Posterior vena cava (tissue), 2 donors: ENCODE measurements at regions of chr3 and their contacts with region 1.

Region 1: DNA sequence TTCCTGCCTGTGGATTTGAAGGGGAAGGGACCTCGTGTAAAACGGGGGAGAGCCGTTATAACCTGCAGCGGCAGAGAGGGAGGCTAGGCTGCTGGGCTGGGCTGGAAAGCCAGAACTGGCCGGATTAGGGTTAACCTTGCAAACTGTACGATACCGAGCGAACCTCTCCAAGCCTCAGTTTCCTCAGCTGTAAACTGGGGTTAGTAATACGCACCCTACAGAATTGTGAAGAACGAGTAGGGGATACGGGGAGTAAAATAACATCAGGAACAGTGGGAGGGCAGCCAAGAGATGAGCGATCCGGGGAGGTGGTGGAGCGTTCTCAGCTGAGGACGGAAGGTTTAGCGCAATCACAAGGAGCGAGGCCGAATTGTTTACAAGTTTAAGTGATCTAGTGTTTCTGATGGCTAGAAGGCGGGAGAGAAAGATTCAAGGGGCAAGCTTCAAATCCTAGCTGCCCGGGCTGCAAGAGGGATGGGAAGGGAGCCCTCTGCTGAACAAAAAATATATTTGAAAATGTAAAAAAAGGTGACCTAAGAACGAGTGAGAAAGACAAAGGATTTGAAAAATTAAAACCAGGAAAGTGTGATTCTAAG is 768 bp upstream of the SEMA5B start:
- DNase-seq: no peak

Region 2: DNA sequence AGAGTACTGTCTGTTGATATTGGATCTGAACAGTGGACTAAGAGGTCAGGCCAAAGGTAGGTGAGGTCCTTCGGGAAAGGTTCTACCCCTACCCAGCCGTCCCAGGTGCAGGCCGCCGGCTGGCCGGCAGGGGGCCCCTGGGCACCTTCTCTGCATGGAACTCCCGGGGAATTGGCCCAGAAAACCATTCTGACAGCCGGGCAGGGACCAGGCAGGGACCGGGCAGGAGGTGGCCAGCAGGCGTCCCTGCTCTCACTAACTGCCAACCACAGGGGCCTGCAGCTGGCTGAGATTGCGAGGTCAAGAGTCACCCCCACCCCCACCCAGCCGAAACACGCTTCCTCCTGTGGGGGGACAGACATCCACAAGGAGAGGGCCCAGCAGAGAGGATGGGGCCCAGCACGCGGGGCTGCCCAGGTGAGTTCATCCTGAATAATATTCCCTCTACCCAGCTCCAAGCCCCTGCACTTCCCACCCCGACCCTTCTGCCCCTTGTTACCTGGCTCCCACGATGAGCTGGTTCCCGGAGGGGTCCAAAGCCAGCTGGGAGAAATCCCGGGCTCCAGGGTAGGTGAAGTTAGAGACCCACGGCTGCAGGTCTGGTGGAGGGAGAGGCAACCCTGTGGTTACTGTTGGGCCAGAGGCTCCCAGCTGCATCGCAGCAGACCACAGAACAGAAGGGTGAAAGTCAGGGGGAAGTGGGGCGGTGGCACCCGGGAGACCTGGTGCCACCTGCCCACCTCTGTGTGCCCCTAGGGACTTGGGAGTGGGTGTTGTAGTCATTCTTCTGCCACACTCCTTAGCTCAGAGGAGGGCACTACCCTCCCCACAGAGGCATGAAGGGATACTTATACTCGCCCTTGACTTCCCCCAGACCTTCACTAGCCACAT is 85.1 kb before region 1 on chr3:
- intact Hi-C with region 1: loop called (anchors 2 kb)
- DNase-seq: peak; percentile 83

Region 3: GRCh38 chr3:122996038-122996580 is 32.2 kb before region 1 on chr3:
- intact Hi-C with region 1: loop called in 1 of 2 experiments (anchors 2 kb)
- DNase-seq: no peak

Region 4: GRCh38 chr3:123096731-123097130 is 68.4 kb after region 1 on chr3:
- intact Hi-C with region 1: loop called in 1 of 2 experiments (anchors 2 kb)
- DNase-seq: peak; percentile 82

Region 5: GRCh38 chr3:123218990-123219389 is 190.7 kb after region 1 on chr3:
- intact Hi-C with region 1: no loop called
- DNase-seq: no peak